Lower leg skin (tissue), 4 donors: ENCODE measurements at regions of chr2 and their contacts with region 1.

Region 1: GRCh38 chr2:229768235-229768634 is 53.9 kb upstream of the DNER start:
- DNase-seq: no peak
- H3K4me3 ChIP-seq: no peak overlapping the region
- CTCF ChIP-seq: no peak
- POLR2A ChIP-seq: no peak

Region 2: GRCh38 chr2:229733611-229734245 is 34.5 kb before region 1 on chr2:
- intact Hi-C with region 1: loop called (anchors 1 kb)
- DNase-seq: no peak
- H3K4me3 ChIP-seq: no peak overlapping the region
- CTCF ChIP-seq: no peak
- POLR2A ChIP-seq: no peak

Region 3: DNA sequence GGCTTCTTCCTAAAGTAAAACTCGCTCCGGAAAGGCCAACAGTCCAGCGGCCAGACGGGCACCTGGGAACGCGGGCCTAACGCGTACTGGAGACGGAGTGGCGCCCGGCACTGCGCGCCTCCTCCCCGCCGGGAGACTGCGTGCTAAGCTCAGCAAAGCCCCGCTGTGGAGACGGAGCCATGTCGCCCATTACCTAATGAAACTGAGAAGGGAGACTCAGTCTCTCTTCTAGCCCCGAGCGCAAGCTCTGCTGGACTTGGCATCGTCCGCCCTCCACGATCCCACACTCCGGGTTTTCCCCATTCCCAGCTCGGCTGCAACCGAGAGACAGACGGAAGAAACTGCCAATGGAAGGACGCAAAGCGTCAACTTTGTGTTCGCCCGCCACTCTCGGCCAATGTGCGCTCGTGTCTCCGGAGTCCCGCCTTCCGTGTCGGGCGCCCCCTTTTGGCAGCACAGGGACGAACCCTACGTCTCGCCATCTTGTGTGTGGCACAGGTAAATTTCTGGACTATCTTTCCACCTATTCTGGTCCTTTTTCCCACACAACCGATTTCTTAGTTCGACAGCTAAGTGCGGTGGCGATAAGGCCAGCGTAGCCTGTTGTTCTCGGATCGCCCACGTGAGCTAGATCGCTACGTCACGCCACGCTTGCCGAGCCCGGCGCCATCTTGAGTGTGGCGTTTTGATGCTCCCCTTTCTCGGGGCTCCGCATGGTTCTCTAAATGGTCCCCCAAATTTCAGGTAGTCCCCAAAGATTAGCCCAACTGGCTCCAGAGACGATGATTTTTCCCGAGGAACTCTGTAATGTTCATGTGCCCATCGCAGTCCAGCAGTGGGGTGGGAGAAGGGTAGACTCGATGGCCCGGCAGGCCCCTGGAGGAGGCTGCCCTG is 1938.7 kb after region 1 on chr2:
- intact Hi-C with region 1: no loop called
- DNase-seq: peak; percentile 98 to 99
- H3K4me3 ChIP-seq: peak overlapping the region; percentile 52
- CTCF ChIP-seq: no peak
- POLR2A ChIP-seq: peak in 1 of 2 donors; percentile 80